ENCODE measurements at regions of chr3 and their contacts with region 1.

Region 1: DNA sequence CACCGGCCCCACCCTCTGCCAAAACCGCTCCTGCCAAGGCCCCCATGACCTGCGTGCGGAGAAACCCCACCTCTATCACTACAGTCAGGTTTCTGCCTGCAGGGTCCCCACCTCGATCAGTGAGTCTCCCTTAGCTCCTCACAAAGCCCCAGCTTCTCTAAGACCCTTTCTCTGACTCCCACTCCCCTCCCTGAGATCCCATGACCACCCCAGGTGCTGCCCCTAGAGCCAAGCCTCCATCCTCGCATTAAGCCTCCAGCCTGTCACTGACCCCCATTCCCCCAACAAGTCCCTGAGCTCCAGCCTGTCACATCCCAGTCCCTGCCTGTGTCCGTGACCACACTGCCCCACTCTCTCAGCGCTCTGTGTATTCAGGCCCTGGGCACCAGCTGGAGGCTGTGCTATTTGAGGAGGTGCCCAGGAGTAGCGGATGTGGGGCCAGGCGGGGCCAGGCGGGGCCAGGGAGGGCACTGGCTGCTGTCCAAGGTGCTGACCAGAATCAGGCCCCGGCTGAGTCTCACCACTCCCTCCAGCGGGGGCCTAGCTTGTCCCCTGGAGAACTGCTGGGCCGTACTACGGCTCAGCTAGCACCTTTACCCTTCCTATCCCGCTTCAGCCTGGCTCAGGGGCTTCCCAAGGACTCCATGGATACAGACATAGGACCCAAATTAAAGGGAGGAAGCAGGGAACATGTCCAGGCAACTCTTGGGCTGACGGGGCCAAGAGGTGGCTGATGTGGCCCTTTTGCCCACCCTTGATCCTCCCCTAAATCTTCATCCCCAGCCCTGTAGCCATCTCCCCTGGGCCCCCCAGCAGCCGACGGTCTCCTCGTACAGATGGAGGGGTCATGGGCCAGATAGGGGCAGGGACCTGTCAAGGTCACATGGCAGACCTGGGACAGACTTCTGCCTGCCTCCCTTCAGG is 1.2 kb downstream of the HHATL start:
- DNase-seq: peak; percentile 87 to 96
- ATAC-seq: peak; percentile 44 to 52
- H3K4me3 ChIP-seq: peak overlapping the region; percentile 39 to 61 (median 54)
- H3K27ac ChIP-seq: peak overlapping the region; percentile 94 to 100 (median 99)
- H3K4me1 ChIP-seq: peaks cover 63 to 64% of the 10 kb centered on the region in 2 donors
- H3K27me3 ChIP-seq: no peaks in the 10 kb centered on the region
- CTCF ChIP-seq: peak in 2 of 5 experiments; percentile 7 to 12
- POLR2A ChIP-seq: peak; percentile 84 to 92

Region 2: DNA sequence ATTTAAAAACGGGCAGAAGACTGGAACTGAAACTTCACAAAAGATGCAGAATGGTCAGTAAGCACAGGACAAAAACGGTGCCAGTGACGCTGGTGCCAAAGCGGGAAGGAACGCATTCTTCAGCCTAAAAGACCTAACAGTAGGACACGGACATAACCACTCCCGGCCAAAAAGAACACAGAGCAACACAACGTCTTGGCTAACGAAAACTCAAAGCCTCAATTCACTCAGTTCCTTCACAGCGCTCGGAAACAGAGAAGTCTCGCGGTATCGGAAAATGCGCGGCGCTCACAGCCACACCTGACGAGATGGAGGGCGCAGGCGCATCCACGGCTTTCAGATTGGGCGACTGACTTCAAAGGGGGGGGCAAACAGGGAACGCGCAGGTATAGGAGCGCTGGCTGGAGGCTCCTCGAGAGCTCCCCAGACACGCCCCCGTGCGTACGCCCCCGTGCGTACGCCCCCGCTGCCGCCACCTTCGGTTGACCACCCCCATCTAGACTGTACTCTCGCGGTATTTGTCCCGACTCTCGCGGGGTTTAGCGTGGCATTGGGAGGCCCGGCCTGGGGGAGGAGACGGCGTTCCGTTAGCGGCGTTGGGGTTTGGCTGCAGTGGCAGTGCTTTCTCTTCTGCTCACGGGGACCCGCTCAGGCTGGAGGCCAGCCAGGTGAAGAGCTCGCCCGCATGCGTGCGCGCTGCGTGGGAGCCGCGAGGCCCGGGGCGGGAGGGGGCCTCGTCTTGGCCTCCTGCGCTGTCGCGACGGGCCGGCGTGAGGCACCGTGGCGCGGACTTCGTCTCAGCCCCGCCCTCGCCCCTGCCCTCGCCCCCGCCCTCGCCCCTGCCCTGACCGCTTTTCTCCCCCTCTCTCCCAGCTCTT is 101.1 kb before region 1 on chr3 and contains the start of gene NKTR:
- in situ Hi-C with region 1: no loop called
- intact Hi-C with region 1: loop called (anchors 5 kb)
- DNase-seq: peak; percentile 94 to 97
- ATAC-seq: peak; percentile 91 to 92
- H3K4me3 ChIP-seq: peak within 1 kb of the TSS; percentile 86 to 93 (median 90)
- H3K27ac ChIP-seq: peak within 1 kb of the TSS; percentile 96 to 99 (median 98)
- H3K4me1 ChIP-seq: peaks cover 29 to 33% of the 10 kb centered on the region in 2 donors
- H3K27me3 ChIP-seq: no peaks in the 10 kb centered on the region
- CTCF ChIP-seq: no peak
- POLR2A ChIP-seq: peak; percentile 88 to 90
- total RNA-seq, gene NKTR: 10.0 to 56.6 (median 13.6) TPM

Region 3: GRCh38 chr3:42613462-42613861 is 87.9 kb before region 1 on chr3:
- in situ Hi-C with region 1: no loop called
- intact Hi-C with region 1: no loop called
- DNase-seq: no peak
- ATAC-seq: peak in 1 of 2 donors; percentile 44
- H3K4me3 ChIP-seq: no peak overlapping the region
- H3K27ac ChIP-seq: peak overlapping the region; percentile 59 to 96 (median 74)
- H3K4me1 ChIP-seq: peaks cover 78 to 86% of the 10 kb centered on the region in 2 donors
- H3K27me3 ChIP-seq: no peaks in the 10 kb centered on the region
- CTCF ChIP-seq: peak; percentile 34 to 48 (median 45)
- POLR2A ChIP-seq: no peak

Region 4: GRCh38 chr3:42652611-42653302 is 48.6 kb before region 1 on chr3:
- in situ Hi-C with region 1: no loop called
- intact Hi-C with region 1: loop called (anchors 2 kb)
- DNase-seq: peak in 1 of 2 donors; percentile 59
- ATAC-seq: no peak
- H3K4me3 ChIP-seq: peak overlapping the region; percentile 67 to 73 (median 70)
- H3K27ac ChIP-seq: peak overlapping the region; percentile 87 to 100 (median 92)
- H3K4me1 ChIP-seq: peaks cover 40 to 42% of the 10 kb centered on the region in 2 donors
- H3K27me3 ChIP-seq: no peaks in the 10 kb centered on the region
- CTCF ChIP-seq: no peak
- POLR2A ChIP-seq: peak; percentile 76 to 80

Region 5: DNA sequence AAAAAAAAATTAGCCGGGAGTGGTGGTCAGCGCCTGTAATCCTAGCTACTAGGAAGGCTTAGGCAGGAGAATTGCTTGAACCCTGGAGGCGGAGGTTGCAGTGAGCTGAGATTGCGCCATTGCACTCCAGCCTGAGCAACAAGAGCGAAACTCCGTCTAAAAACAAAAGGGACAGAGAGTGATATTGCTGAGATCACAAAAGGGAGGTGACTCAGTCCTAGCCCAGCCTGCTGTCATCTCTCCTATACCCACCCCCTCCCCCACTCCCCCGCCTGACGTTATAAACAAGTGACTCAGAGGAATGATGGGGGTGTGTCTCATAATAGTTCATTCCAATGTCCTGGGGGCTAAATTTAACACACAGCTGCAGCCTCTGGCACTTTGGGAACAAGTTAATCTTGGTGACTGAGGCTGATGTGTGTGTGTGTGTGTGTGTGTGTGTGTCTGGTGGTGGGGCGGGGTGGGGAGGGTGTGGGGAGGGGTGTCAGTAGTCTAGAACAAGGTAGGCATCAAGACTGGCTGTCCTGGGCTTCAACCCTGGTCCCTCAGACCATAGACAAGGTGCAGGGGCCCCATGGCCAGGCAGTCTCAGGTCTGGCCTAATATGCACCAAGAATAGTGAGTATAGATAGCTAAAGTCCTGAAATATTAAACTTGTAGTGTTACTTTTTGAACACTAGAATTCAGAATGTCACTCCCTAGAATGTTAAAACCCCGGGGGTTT is 17.4 kb before region 1 on chr3:
- in situ Hi-C with region 1: no loop called
- intact Hi-C with region 1: loop called (anchors 2 kb)
- DNase-seq: peak; percentile 93 to 97
- ATAC-seq: peak; percentile 74 to 78
- H3K4me3 ChIP-seq: peak overlapping the region in 3 of 4 donors; percentile 12 to 28 (median 26)
- H3K27ac ChIP-seq: peak overlapping the region; percentile 94 to 100 (median 99)
- H3K4me1 ChIP-seq: peaks cover 31 to 49% of the 10 kb centered on the region in 2 donors
- H3K27me3 ChIP-seq: no peaks in the 10 kb centered on the region
- CTCF ChIP-seq: no peak
- POLR2A ChIP-seq: peak; percentile 25 to 32

Region 6: DNA sequence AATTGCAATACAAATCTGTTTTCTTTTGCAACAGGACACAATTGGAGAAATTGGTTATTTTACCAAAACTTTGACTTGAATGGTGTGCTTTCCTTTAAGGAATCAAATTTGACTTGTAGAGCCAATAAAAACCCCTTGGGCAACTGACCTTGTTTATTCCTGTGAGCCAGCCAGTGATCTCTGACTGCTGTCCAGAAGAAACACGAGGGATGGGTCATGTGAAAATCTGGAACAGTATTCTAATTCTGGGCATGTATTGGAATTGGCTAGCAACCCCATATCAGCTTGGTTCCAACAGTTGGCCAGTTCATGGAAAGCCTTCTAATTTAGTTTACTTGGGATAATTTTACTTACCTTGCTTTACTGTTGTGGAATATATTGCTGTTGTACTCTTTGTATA is 20.3 kb after region 1 on chr3:
- in situ Hi-C with region 1: no loop called
- intact Hi-C with region 1: loop called (anchors 1 kb)
- DNase-seq: peak in 1 of 2 donors; percentile 37
- ATAC-seq: peak; percentile 84 to 92
- H3K4me3 ChIP-seq: no peak overlapping the region
- H3K27ac ChIP-seq: peak overlapping the region; percentile 69 to 77 (median 74)
- H3K4me1 ChIP-seq: peaks cover 22 to 25% of the 10 kb centered on the region in 2 donors
- H3K27me3 ChIP-seq: no peaks in the 10 kb centered on the region
- CTCF ChIP-seq: no peak
- POLR2A ChIP-seq: no peak

Region 7: DNA sequence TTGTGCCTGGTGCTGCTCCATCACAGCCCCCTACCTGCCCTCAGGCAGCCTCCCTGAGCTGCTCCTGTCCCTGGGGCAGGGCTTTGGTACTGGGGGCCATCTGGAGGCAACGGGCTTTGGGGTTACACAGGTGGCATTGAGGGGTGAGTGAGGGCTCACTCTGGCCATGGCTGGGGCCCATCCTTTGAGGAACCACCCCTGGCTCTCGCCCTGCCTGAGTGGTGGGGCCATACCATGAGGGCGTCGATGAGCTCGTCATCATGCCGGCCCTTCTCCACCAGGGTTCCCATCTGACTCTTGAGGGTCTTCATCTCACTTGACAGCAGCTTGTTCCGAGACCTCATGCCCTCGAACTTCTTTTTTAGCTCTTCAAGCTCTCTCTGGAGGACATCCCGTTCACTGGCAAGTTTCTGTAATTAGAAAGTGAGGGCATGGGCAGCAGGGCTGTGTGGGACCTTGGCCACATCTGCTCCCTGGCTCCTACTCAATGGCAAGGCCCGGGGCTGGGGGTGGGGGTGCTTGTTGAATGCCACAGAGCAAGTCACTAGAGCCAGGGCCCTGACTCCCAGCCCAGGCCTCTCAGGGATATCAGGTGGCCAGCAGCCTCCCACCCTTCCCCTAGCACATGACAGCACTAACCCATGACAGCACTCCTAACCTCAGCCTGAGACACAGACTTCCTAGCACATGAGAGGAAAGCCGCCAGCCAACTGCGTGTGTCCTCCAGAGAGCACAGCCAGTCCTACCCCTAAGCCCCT is 38.2 kb after region 1 on chr3:
- in situ Hi-C with region 1: loop called in 1 of 4 experiments (anchors 5 kb)
- intact Hi-C with region 1: loop called (anchors 1 kb)
- DNase-seq: peak; percentile 98 to 100
- ATAC-seq: peak; percentile 85 to 87
- H3K4me3 ChIP-seq: no peak overlapping the region
- H3K27ac ChIP-seq: peak overlapping the region; percentile 85 to 99 (median 94)
- H3K4me1 ChIP-seq: peaks cover 22 to 42% of the 10 kb centered on the region in 2 donors
- H3K27me3 ChIP-seq: no peaks in the 10 kb centered on the region
- CTCF ChIP-seq: peak in 1 of 5 experiments; percentile 42
- POLR2A ChIP-seq: peak; percentile 64 to 72